ENCODE measurements at regions of chr1 and their contacts with region 1.

Region 1: GRCh38 chr1:119827010-119827409 is 15.8 kb upstream of the REG4 start:
- DNase-seq: peak; percentile 14
- H3K4me3 ChIP-seq: no peak overlapping the region
- H3K27ac ChIP-seq: no peak overlapping the region
- H3K4me1 ChIP-seq: no peaks in the 10 kb centered on the region
- H3K27me3 ChIP-seq: no peaks in the 10 kb centered on the region; the same call in 1 of the 2 replicates
- CTCF ChIP-seq: peak; percentile 52
- EP300 ChIP-seq: no peak
- RAD21 ChIP-seq: no peak

Region 2: GRCh38 chr1:119816407-119816806 is 10.6 kb before region 1 on chr1:
- CTCF ChIA-PET with region 1: interaction called, 13 read pairs
- POLR2A ChIA-PET with region 1: no interaction called
- DNase-seq: no peak
- H3K4me3 ChIP-seq: no peak overlapping the region
- H3K27ac ChIP-seq: no peak overlapping the region
- H3K4me1 ChIP-seq: 0 out of 4 replicates have a peak, but pooled peaks cover 0 to 6% of the 10 kb centered on the region in 2 experiments
- H3K27me3 ChIP-seq: no peaks in the 10 kb centered on the region
- CTCF ChIP-seq: no peak
- EP300 ChIP-seq: no peak
- RAD21 ChIP-seq: no peak

Measured in SK-N-SH (cell line).